Caco-2 (cell line): ENCODE measurements at regions of chr22 and their contacts with region 1.

Region 1: DNA sequence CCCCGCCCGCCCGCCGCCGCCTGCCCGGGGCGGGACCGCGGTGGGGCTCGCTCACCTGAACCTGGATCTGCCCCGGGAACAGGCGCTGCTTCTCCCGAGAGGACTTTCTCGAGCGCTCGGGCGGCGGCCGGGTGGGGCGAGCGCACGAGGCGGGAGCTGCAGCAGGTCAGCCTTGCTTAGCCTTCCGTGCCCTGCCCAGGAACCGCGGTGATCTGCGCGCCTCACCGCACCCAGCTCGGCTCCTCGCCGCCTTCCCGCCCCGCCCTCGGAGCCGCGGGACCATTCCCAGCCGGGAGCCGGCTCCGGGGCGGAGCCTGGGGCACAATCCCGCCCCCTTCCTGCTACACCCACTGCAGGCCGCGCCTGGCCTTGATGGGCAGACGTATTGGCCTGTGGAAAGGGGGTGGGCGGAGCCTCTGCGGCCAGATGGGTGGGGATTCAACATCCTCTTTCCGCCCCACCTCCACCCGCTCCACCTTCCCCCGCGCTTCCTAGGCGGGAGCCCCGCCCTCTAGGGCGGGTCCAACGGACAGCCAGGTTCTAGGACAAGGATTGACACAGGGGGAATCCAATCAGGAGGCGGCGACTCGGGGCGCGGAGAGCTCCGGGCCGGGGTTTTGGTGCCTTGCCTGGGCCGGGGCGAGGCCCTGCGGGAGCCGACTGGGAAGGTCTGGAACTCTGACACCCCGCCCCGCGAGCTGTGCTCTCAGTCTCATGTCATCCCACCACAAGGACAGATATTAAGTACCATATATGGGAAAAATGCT is at the start of gene MYH9:
- DNase-seq: peak; percentile 100
- H3K4me3 ChIP-seq: peak within 1 kb of the TSS; percentile 98
- H3K4me3 Mint-ChIP-seq: peak within 1 kb of the TSS; percentile 94
- H3K27ac Mint-ChIP-seq: peak within 1 kb of the TSS; percentile 81
- H3K4me1 ChIP-seq: peaks cover 21% of the 10 kb centered on the region
- H3K4me1 Mint-ChIP-seq: peaks cover 21% of the 10 kb centered on the region
- H3K27me3 ChIP-seq: no peaks in the 10 kb centered on the region
- H3K27me3 Mint-ChIP-seq: no peaks in the 10 kb centered on the region
- CTCF ChIP-seq: no peak
- total RNA-seq, gene MYH9: 513 and 539 TPM in 2 replicates

Region 2: DNA sequence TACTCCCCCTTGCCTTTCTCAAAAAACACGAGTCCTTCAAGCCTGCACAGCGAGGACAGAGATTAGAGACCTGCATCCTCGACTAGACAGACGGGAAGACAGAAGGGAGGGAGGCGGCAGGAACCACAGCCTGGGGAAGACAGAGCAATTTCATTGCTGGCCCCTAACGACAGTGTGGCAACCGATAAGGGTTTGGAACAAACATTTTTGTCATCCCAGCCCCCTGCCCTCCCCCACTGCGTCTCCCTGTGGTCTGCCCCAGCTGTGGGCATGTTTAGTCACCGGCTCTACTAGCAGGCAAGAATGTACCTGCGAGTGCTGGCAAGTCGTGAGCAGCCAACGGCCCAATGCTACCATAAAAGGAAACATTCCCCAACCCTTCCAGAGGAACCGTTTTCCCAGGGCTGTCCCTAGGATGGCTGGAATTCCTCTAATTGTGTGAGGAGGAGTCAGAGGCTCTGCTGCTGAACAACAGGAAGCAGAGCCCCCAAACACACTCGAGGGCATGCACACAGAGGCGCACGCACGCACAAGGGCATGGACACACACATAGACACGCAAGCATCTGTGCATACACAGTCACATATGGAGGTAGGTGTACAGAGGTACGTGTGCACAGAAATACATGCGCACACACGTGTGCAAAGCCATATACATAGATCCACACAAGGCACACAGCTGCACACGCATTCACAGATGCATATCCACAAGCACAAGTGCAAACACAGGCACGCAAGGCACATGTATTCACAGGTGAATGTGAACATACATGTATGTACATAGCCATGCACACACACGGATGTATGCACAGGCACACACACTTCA is 58.5 kb before region 1 on chr22:
- CTCF ChIA-PET with region 1: no interaction called
- POLR2A ChIA-PET with region 1: interaction called, 5 read pairs
- intact Hi-C with region 1: loop called (anchors 1 kb)
- DNase-seq: peak; percentile 89 to 94
- H3K4me3 ChIP-seq: no peak overlapping the region
- H3K4me3 Mint-ChIP-seq: peak overlapping the region; percentile 51
- H3K27ac Mint-ChIP-seq: peak overlapping the region; percentile 95
- H3K4me1 ChIP-seq: peaks cover 62% of the 10 kb centered on the region
- H3K4me1 Mint-ChIP-seq: peaks cover 64% of the 10 kb centered on the region
- H3K27me3 ChIP-seq: no peaks in the 10 kb centered on the region
- H3K27me3 Mint-ChIP-seq: no peaks in the 10 kb centered on the region
- CTCF ChIP-seq: no peak

Region 3: DNA sequence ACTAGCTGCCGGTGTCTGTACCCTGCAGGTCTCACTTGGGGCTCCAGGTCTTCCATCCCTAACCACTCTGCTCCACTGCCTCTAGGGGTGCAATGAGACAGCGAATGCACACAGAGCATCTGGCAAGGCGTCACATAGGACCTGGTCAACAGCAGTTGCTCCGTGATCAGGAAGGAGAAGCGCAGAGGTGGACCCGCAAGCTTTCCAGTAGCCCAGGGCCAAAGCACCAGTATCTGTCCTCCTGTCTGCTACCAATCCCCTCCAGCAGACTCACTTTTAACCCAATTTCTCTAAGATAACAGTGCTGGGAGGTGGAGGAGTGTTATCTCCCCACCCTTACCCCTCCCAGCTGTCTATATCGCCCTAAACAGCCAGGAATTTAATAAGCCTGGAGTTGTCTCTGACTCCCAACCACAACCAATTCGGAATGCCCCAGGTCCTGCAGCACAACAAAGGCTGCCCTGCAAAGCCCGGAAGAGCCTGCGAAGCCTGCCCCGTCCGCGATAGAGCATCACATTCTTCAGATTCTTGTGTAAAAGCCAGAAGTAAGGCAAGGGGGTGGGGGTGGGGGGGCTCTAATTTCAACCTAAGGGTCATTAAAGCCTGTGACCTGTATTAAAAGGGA is 19.5 kb before region 1 on chr22:
- CTCF ChIA-PET with region 1: no interaction called
- POLR2A ChIA-PET with region 1: interaction called, 14 read pairs
- intact Hi-C with region 1: loop called (anchors 1 kb)
- DNase-seq: peak; percentile 69 to 82
- H3K4me3 ChIP-seq: no peak overlapping the region
- H3K4me3 Mint-ChIP-seq: peak overlapping the region; percentile 60
- H3K27ac Mint-ChIP-seq: peak overlapping the region; percentile 79
- H3K4me1 ChIP-seq: peaks cover 94% of the 10 kb centered on the region
- H3K4me1 Mint-ChIP-seq: peaks cover 64% of the 10 kb centered on the region
- H3K27me3 ChIP-seq: no peaks in the 10 kb centered on the region
- H3K27me3 Mint-ChIP-seq: no peaks in the 10 kb centered on the region
- CTCF ChIP-seq: peak in 1 of 2 experiments; percentile 14

Region 4: GRCh38 chr22:36409911-36410756 is 22.2 kb after region 1 on chr22:
- CTCF ChIA-PET with region 1: no interaction called
- POLR2A ChIA-PET with region 1: interaction called, 26 read pairs
- intact Hi-C with region 1: loop called (anchors 2 kb)
- DNase-seq: peak; percentile 98 to 99
- H3K4me3 ChIP-seq: peak overlapping the region; percentile 45
- H3K4me3 Mint-ChIP-seq: peak overlapping the region; percentile 69
- H3K27ac Mint-ChIP-seq: peak overlapping the region; percentile 90
- H3K4me1 ChIP-seq: peaks cover 21% of the 10 kb centered on the region
- H3K4me1 Mint-ChIP-seq: peaks cover 13% of the 10 kb centered on the region
- H3K27me3 ChIP-seq: no peaks in the 10 kb centered on the region
- H3K27me3 Mint-ChIP-seq: no peaks in the 10 kb centered on the region
- CTCF ChIP-seq: peak; percentile 10 to 11

Region 5: DNA sequence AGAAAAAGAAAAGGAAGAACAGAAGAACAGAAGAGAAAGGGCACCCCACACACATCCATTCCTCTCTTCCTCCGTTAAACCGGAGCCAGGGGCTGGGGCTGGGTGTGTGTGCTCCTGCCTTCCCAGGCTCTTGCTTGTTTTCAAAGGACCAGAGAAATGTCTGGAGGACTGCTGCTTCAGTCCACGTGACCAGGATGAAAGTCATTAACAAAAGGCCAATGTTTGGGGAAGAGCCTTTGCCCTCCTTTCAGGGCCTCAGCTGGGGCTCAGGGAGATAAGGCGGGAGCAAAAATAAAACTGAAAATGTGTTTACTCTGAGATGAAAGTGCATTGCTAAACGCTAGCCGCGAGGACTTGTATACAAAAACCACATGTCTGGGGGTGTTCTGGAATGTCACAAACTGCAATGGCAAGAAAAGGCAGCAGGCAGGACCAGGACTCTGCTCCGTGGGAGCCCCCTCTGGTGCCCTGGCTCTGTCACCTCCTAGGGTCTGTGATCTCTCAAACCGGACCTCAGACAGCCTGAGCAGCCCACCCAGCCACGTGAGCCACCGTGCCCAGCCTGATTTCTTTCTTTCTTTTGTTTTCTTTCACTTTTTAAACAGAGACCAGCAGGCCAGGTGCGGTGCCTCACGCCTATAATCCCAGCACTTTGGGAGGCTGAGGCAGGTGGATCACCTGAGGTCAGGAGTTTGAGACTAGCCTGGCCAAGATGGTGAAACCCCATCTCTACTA is 31.4 kb after region 1 on chr22:
- CTCF ChIA-PET with region 1: no interaction called
- POLR2A ChIA-PET with region 1: interaction called, 10 read pairs
- intact Hi-C with region 1: no loop called
- DNase-seq: peak; percentile 91 to 92
- H3K4me3 ChIP-seq: peak overlapping the region; percentile 25
- H3K4me3 Mint-ChIP-seq: peak overlapping the region; percentile 70
- H3K27ac Mint-ChIP-seq: peak overlapping the region; percentile 91
- H3K4me1 ChIP-seq: peaks cover 41% of the 10 kb centered on the region
- H3K4me1 Mint-ChIP-seq: peaks cover under 1% of the 10 kb centered on the region
- H3K27me3 ChIP-seq: no peaks in the 10 kb centered on the region
- H3K27me3 Mint-ChIP-seq: no peaks in the 10 kb centered on the region
- CTCF ChIP-seq: no peak